ENCODE measurements at regions of chr22 and their contacts with region 1.

Region 1: GRCh38 chr22:21001560-21002325 is at the start of gene THAP7:
- DNase-seq: peak; percentile 99 to 100
- ATAC-seq: peak; percentile 98
- H3K4me3 ChIP-seq: peak within 1 kb of the TSS; percentile 67 to 78
- H3K27ac ChIP-seq: peak within 1 kb of the TSS; percentile 69 to 97
- H3K4me1 ChIP-seq: no peaks in the 10 kb centered on the region
- H3K27me3 ChIP-seq: no peaks in the 10 kb centered on the region
- total RNA-seq, gene THAP7: 17.0 to 20.8 TPM

Region 2: GRCh38 chr22:20981787-20982562 is 19.8 kb before region 1 on chr22 and contains the start of gene LZTR1:
- intact Hi-C with region 1: loop called in 1 of 2 experiments (anchors 1 kb)
- DNase-seq: peak; percentile 91 to 95
- ATAC-seq: peak; percentile 95
- H3K4me3 ChIP-seq: peak within 1 kb of the TSS; percentile 68 to 83
- H3K27ac ChIP-seq: peak within 1 kb of the TSS; percentile 15 to 78
- H3K4me1 ChIP-seq: no peaks in the 10 kb centered on the region
- H3K27me3 ChIP-seq: no peaks in the 10 kb centered on the region
- total RNA-seq, gene LZTR1: 59.0 to 81.7 TPM